GM10248 (cell line): ENCODE measurements at regions of chr1 and their contacts with region 1.

Region 1: DNA sequence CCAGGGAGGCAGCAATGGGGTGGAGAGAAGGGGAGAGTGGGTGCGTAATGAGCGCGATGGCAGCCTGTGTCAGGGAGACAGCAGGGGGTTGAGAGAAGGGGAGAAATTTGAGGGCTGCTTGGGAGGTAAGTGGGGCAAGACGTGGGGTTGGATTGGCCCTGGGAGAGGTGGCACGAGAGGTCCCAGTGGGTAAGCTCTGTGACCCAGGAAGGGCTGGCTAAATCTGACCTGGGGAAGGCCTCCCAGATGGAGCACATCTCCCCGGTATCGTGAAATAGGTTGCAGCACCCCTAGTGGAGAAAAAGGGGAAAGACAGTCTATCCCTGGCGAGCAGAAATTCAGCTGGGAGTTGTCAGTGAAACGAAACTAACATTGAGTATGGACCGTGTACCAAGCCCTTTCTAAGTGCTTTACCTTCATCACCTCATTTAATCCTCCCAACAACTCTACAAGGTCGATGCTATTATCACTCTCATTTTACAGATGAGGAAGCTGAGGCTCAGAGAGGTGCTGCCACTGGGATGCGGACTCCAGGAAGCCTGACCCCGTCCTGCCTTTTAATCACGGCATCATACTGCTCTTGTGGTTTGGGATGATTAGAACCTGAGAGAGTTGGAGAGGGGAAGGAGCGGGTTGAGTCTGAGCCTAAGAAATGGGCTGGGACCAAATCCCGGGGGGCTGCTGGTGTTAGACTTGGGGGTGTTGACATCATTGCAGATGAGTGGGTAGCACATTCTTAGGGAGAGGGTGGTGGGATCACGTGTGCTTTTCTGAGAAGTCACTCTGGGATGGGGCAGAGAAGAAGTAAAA is 56.6 kb upstream of the RPL11 start:
- DNase-seq: peak; percentile 84
- CTCF ChIP-seq: peak; percentile 88

Region 2: GRCh38 chr1:23530747-23531561 is 104.1 kb before region 1 on chr1 and contains the start of gene E2F2:
- CTCF ChIA-PET with region 1: interaction called, 41 read pairs
- POLR2A ChIA-PET with region 1: no interaction called
- DNase-seq: peak; percentile 96
- CTCF ChIP-seq: peak; percentile 42

Region 3: GRCh38 chr1:23567996-23568607 is 66.9 kb before region 1 on chr1:
- CTCF ChIA-PET with region 1: interaction called, 32 read pairs
- POLR2A ChIA-PET with region 1: interaction called, 5 read pairs
- DNase-seq: no peak
- CTCF ChIP-seq: no peak

Region 4: GRCh38 chr1:23591460-23592208 is 43.4 kb before region 1 on chr1:
- CTCF ChIA-PET with region 1: interaction called, 34 read pairs
- POLR2A ChIA-PET with region 1: no interaction called
- DNase-seq: peak; percentile 79
- CTCF ChIP-seq: no peak

Region 5: DNA sequence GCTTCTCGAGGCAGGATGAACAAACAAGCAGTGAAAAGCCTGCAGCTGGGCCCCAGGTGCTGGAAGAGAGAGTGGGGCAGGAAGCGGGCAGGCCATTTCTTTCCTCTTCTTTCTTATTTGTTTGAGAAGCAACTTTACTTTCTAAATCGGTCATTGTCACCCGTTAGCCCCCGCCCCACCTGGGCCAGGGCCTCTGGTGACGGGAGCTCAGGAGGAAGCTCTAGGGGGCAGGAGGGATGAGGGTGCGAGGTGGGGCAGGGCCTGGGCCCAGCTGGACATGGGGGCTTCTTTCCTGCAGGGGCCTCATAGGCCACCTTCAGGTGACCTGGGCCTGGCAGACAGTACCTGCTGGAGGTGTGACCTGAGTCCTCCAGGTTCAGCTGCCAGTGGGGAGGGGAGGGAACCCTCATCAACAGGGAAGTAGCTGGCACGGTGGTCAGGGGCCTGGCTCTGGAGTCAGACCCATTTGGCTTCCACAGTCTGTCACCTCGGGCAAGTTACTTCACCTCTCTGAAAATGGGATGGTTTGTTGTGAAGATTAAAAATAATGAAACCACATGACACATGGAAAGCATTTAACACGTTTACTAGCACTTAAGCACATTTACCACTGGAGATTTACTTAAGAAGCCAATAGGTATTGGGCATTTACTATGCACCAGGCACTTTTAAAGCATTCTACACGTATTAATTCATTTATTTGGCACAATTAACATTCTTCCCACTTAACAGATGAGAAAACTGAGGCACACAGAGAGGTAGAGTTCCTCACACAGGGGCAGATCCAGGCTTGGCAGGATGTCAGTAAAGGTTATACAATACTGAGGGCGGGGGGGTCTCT is 21.6 kb before region 1 on chr1:
- CTCF ChIA-PET with region 1: interaction called, 133 read pairs
- POLR2A ChIA-PET with region 1: no interaction called
- DNase-seq: peak; percentile 59
- CTCF ChIP-seq: no peak

Region 6: DNA sequence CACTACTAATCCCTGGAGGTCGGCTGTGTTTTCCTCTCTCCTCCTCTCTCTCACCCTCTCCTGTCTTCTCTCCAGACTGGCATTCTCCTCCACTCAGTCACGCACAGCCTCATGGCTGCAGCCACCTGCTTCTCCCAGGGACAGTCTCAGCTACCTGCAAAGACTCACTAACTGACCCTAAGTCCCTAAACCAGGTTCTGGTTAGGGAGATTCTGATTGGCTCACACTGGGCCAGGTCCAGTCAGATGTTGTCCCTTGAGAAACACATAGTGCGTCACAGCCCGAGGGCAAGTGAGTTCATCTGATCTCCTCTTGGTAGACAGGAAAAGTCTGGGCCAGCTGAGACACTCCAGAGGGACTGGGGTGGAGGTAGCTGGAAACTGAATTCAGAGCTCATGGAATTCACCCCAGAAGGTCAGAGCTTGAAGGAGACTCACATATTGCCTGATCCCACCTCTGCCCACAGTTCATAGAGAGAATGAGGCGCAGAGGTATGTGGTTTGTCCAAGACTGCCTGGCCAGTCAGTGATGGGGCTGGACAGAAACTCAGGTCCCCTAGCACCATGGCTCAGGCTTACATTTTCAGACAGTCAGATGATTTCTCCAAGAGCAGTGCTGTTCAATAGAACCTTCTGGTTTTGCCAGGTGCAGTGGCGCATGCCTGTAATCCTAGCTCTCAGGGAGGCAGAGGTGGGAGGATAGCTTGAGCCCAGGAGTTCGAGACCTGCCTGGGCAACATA is 16.2 kb after region 1 on chr1:
- CTCF ChIA-PET with region 1: interaction called, 39 read pairs
- POLR2A ChIA-PET with region 1: no interaction called
- DNase-seq: no peak
- CTCF ChIP-seq: no peak